ENCODE measurements at regions of chr7 and their contacts with region 1.

Region 1: GRCh38 chr7:73522105-73522872 is at the start of gene BAZ1B:
- DNase-seq: peak; percentile 96 to 99 (median 98)

Region 2: GRCh38 chr7:73433924-73434700 is 88.2 kb before region 1 on chr7:
- intact Hi-C with region 1: no loop called
- DNase-seq: peak in 3 of 42 donors; percentile 12 to 35 (median 26)

Region 3: DNA sequence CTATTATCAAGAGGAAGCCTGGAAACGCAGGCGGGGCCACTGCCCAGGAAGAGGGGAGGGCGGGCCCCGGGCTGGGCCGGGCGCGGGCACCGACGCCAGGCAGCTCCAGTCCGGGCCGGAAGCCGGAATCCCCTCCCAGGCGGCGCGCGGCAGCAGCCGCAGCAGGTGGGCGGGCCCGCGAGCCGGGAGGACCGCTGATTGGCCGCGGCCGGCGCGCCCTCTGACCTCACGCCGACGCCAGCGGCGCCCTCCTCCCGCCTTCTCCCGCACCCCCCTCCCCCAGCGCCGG is 34.8 kb after region 1 on chr7:
- intact Hi-C with region 1: loop called (anchors 2 kb)
- DNase-seq: peak; percentile 75 to 98 (median 93)

Region 4: GRCh38 chr7:73578342-73579127 is 56.2 kb after region 1 on chr7 and contains the start of gene TBL2:
- intact Hi-C with region 1: loop called (anchors 5 kb)
- DNase-seq: peak; percentile 95 to 100 (median 99)

Region 5: GRCh38 chr7:73612598-73613269 is 90.4 kb after region 1 on chr7:
- intact Hi-C with region 1: no loop called
- DNase-seq: no peak

Measured in head of caudate nucleus (tissue), 42 donors.